Naive thymus-derived CD4-positive, alpha-beta T cell (primary cell): ENCODE measurements at regions of chr12 and their contacts with region 1.

Region 1: DNA sequence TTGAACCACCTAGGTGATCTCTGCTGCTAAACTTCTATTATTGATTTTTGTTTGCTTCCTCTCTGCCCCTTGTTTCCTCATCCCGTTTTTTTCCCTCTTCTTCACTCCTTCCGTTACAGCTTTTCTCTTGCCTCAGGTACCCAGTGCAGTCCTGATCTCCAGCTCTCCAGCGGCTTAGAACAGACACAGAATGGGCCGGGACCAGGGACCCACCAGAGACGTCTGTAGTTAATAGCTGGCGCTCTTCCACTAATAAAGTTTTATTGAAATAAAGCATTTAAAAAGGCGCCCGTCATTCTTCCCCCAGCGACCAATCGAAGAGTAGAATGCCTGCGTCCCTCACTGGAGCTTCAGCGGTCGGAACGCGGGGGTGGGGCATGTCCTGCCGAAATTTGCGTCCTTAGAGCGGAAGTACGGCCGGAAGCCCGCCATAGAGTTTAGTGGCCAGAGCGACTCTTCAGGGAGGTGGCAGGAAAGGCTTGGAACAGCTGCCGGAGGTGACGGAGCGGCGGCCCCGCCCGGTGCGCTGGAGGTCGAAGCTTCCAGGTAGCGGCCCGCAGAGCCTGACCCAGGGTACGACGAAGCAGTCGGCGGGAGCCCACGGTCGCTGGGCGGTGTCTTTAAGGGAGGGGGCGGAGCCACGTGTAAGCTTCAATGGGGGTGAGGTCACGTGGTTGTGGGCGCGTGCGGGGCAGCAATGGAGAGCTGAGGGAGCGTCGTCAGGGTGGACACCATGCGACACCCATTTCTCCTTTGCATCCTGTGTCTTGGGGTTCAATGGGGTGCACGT is at the start of gene COPS7A:
- DNase-seq: peak; percentile 77 to 94 (median 90)
- ATAC-seq: peak; percentile 93
- H3K4me3 ChIP-seq: peak within 1 kb of the TSS; percentile 63
- H3K4me3 Mint-ChIP-seq: peak within 1 kb of the TSS; percentile 80 to 97 (median 92)
- H3K27ac ChIP-seq: peak within 1 kb of the TSS; percentile 75
- H3K27ac Mint-ChIP-seq: peak within 1 kb of the TSS; percentile 90 to 98 (median 96)
- H3K4me1 ChIP-seq: peaks cover 10 to 11% of the 10 kb centered on the region in 2 donors
- H3K4me1 Mint-ChIP-seq: peaks cover 24 to 34% (median 27%) of the 10 kb centered on the region in 7 donors
- H3K27me3 ChIP-seq: no peaks in the 10 kb centered on the region
- H3K27me3 Mint-ChIP-seq: no peaks in the 10 kb centered on the region
- total RNA-seq, gene COPS7A: 21.9 to 38.7 (median 30.1) TPM

Region 2: DNA sequence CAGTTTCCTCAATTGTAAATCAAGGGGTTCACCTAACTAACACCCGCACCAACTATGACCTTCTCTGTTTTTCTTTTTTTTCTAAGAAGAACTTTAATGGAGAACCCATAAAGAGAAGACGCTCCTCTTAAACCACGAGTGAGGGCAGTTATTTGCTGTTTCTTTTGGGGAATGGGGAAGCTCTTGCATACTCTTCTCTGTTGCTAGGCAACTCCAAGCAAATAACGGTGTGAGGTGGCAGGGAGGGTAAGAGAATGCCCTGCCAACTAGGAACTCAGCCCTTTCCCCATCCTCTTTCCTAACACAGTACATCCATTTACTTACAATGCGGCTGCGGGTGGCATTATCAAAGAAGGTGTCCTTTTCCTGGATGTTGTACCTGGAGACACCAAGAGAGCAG is 893.7 kb before region 1 on chr12:
- CTCF ChIA-PET with region 1: no interaction called
- POLR2A ChIA-PET with region 1: no interaction called
- intact Hi-C with region 1: no loop called
- DNase-seq: no peak
- ATAC-seq: no peak
- H3K4me3 ChIP-seq: no peak overlapping the region
- H3K4me3 Mint-ChIP-seq: no peak overlapping the region
- H3K27ac ChIP-seq: no peak overlapping the region
- H3K27ac Mint-ChIP-seq: no peak overlapping the region
- H3K4me1 ChIP-seq: no peaks in the 10 kb centered on the region
- H3K4me1 Mint-ChIP-seq: no peaks in the 10 kb centered on the region
- H3K27me3 ChIP-seq: no peaks in the 10 kb centered on the region
- H3K27me3 Mint-ChIP-seq: peaks cover 3 to 50% (median 19%) of the 10 kb centered on the region in 5 donors

Region 3: GRCh38 chr12:6250343-6250742 is 473.5 kb before region 1 on chr12:
- CTCF ChIA-PET with region 1: no interaction called
- POLR2A ChIA-PET with region 1: no interaction called
- intact Hi-C with region 1: no loop called
- DNase-seq: no peak
- ATAC-seq: no peak
- H3K4me3 ChIP-seq: no peak overlapping the region
- H3K4me3 Mint-ChIP-seq: no peak overlapping the region
- H3K27ac ChIP-seq: no peak overlapping the region
- H3K27ac Mint-ChIP-seq: no peak overlapping the region
- H3K4me1 ChIP-seq: no peaks in the 10 kb centered on the region
- H3K4me1 Mint-ChIP-seq: no peaks in the 10 kb centered on the region
- H3K27me3 ChIP-seq: no peaks in the 10 kb centered on the region
- H3K27me3 Mint-ChIP-seq: peaks cover 0 to 12% (median 9%) of the 10 kb centered on the region in 5 donors

Region 4: GRCh38 chr12:6563448-6564050 is 160.3 kb before region 1 on chr12:
- CTCF ChIA-PET with region 1: no interaction called
- POLR2A ChIA-PET with region 1: interaction called, 4 read pairs
- intact Hi-C with region 1: loop called in 1 of 2 experiments (anchors 1 kb)
- DNase-seq: peak; percentile 36 to 68 (median 52)
- ATAC-seq: peak; percentile 43
- H3K4me3 ChIP-seq: no peak overlapping the region
- H3K4me3 Mint-ChIP-seq: peak overlapping the region in 2 of 10 donors; percentile 6 to 55
- H3K27ac ChIP-seq: no peak overlapping the region
- H3K27ac Mint-ChIP-seq: peak overlapping the region in 7 of 9 donors; percentile 9 to 86 (median 78)
- H3K4me1 ChIP-seq: peaks cover 8 to 14% of the 10 kb centered on the region in 2 donors
- H3K4me1 Mint-ChIP-seq: peaks cover 22 to 54% (median 41%) of the 10 kb centered on the region in 7 donors
- H3K27me3 ChIP-seq: no peaks in the 10 kb centered on the region
- H3K27me3 Mint-ChIP-seq: no peaks in the 10 kb centered on the region

Region 5: DNA sequence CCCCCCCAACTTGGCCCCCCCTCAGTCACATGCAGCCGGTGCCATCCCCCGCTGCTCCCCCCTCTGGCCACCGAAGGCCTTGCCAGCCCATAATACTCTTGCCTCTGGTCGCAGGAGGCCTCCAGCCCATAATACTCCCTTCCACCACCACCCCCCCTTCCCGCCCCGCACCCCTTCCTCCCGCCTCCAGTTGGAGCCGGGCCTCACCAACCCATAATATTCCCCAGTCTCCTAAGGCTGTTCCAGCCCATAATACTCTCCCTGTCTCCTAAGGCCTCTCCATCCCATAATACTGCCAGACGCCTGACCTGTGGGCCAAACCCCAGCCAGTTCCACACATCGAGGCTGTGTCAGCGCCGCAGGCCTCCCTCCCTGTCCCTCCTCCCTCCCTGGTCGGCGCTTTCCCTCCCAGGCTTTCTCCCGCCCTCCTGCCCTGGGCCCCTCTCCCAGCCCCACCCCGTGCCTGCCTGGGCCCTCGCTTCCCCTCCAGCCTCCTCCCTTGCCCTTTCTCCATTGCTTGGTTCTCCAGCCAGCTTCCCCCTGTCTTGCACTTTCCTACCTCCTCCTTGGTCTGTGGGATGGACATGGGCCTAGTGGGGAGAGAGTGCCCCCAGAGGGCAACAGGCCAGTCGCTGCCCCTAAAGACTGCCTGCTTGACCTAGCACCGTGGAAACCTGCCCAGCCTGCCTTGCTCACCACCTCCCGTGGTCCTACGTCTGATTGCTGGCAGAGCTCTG is 109.9 kb before region 1 on chr12:
- CTCF ChIA-PET with region 1: interaction called, 3 read pairs
- POLR2A ChIA-PET with region 1: interaction called, 6 read pairs
- intact Hi-C with region 1: loop called in 1 of 2 experiments (anchors 1 kb)
- DNase-seq: peak in 2 of 9 donors; percentile 28 to 32
- ATAC-seq: peak; percentile 74
- H3K4me3 ChIP-seq: no peak overlapping the region
- H3K4me3 Mint-ChIP-seq: peak overlapping the region in 7 of 10 donors; percentile 30 to 70 (median 36)
- H3K27ac ChIP-seq: peak overlapping the region; percentile 64
- H3K27ac Mint-ChIP-seq: peak overlapping the region; percentile 51 to 91 (median 87)
- H3K4me1 ChIP-seq: peaks cover 20 to 30% of the 10 kb centered on the region in 2 donors
- H3K4me1 Mint-ChIP-seq: peaks cover 26 to 54% (median 48%) of the 10 kb centered on the region in 7 donors
- H3K27me3 ChIP-seq: no peaks in the 10 kb centered on the region
- H3K27me3 Mint-ChIP-seq: no peaks in the 10 kb centered on the region

Region 6: DNA sequence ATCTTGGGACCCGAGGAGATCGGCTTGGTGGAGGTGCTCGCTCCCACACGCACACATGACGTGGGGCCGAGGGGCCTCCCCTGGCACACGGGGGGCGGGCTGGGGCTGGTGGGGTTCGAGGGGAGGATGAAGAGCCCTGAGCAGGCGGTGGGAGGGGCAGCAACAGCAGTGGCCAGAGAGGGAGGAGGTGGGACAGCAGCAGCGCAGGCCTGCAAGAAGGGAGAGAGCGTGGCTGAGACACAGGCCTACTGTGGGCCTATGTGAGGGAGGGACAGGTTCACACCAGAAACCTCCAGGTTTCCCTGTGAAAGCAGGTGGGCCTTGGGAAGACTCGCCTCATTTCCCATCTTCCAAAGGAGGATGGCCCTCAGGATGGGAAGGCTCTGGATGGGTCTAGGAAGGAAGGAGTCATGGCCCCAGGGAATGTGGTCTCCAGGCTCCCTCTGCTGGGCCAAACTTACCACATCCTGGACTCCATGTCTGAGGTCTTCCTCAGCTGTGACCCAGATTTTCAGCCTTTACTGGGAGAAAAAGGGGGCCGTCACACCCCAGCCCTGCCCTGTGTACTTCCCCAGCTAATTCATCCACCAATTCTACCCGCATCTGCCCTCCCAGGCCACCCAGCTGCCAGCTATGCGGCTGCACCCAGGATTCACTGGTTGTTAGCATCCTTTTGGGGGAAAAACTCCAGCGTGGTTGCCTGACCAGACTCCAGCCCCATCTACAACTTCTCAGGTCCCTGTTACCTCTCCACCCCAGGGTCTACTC is 26.0 kb before region 1 on chr12:
- CTCF ChIA-PET with region 1: interaction called, 5 read pairs
- POLR2A ChIA-PET with region 1: interaction called, 16 read pairs
- intact Hi-C with region 1: loop called in 1 of 2 experiments (anchors 1 kb)
- DNase-seq: no peak
- ATAC-seq: peak; percentile 25
- H3K4me3 ChIP-seq: no peak overlapping the region
- H3K4me3 Mint-ChIP-seq: peak overlapping the region in 1 of 10 donors; percentile 25
- H3K27ac ChIP-seq: no peak overlapping the region
- H3K27ac Mint-ChIP-seq: peak overlapping the region in 2 of 9 donors; percentile 24 to 51
- H3K4me1 ChIP-seq: peaks cover 5 to 8% of the 10 kb centered on the region in 2 donors
- H3K4me1 Mint-ChIP-seq: peaks cover 9 to 39% (median 28%) of the 10 kb centered on the region in 7 donors
- H3K27me3 ChIP-seq: peaks cover 0 to 6% of the 10 kb centered on the region in 2 donors
- H3K27me3 Mint-ChIP-seq: peaks cover 0 to 47% (median 29%) of the 10 kb centered on the region in 5 donors

Region 7: DNA sequence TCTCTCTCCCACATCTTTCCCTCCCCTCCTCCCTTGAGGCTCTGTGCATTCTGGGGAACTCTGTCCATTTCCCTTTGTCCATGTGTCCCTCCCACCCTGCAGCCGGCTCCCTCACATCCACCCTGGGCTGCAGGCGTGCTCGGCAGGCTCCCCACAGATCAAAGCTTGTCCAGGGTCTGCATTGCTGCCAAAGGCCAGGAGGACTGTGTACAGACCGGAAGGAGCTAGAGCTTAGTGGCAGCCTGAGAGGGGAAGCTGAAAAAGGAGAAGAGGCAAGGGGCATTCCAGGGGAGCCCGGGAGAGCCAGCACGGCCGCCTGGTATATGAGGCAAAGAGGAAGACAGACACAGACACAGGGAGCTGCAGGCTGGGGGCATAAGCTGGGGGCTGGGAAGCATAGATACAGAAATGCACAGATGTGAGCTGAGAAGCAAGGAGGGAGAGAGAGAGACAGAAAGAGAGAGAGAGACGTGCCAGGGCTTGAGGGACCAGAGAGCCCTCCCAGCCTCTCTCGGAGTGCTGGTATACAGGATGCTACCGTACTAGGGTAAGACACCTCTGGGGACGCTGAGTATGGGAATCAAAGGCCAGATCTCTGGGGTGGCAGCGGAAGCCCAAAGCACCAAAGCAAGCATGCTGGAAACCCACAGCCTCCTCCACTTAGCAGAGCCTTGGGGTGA is 68.9 kb after region 1 on chr12:
- CTCF ChIA-PET with region 1: no interaction called
- POLR2A ChIA-PET with region 1: interaction called, 8 read pairs
- intact Hi-C with region 1: loop called in 1 of 2 experiments (anchors 1 kb)
- DNase-seq: peak in 7 of 9 donors; percentile 66 to 79 (median 76)
- ATAC-seq: peak; percentile 76
- H3K4me3 ChIP-seq: peak overlapping the region; percentile 87
- H3K4me3 Mint-ChIP-seq: peak overlapping the region; percentile 85 to 99 (median 96)
- H3K27ac ChIP-seq: peak overlapping the region; percentile 86
- H3K27ac Mint-ChIP-seq: peak overlapping the region; percentile 88 to 99 (median 97)
- H3K4me1 ChIP-seq: peaks cover 0 to 29% of the 10 kb centered on the region in 2 donors
- H3K4me1 Mint-ChIP-seq: peaks cover 52 to 84% (median 72%) of the 10 kb centered on the region in 7 donors
- H3K27me3 ChIP-seq: no peaks in the 10 kb centered on the region
- H3K27me3 Mint-ChIP-seq: no peaks in the 10 kb centered on the region

Region 8: DNA sequence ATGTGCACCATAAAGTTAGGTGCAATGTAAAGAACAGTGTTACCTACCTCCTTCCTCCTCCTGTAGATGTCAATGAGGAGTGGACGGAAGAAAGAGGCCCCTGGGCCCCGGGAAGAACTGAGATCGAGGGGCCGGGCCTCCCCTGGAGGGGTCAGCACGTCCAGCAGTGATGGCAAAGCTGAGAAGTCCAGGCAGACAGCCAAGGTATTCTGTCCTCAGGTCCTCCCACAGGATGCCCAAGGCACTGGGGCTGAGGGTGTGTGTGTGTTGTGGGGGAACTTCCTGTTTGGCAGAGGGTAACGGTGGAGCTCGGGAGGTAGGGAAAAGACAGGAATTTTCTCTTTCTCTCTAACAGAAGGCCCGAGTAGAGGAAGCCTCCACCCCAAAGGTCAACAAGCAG is 210.3 kb after region 1 on chr12:
- CTCF ChIA-PET with region 1: no interaction called
- POLR2A ChIA-PET with region 1: no interaction called
- intact Hi-C with region 1: no loop called
- DNase-seq: no peak
- ATAC-seq: no peak
- H3K4me3 ChIP-seq: no peak overlapping the region
- H3K4me3 Mint-ChIP-seq: peak overlapping the region in 3 of 10 donors; percentile 41 to 59 (median 42)
- H3K27ac ChIP-seq: peak overlapping the region; percentile 92
- H3K27ac Mint-ChIP-seq: peak overlapping the region; percentile 57 to 99 (median 84)
- H3K4me1 ChIP-seq: peaks cover 6 to 46% of the 10 kb centered on the region in 2 donors
- H3K4me1 Mint-ChIP-seq: peaks cover 49 to 82% (median 67%) of the 10 kb centered on the region in 7 donors
- H3K27me3 ChIP-seq: no peaks in the 10 kb centered on the region
- H3K27me3 Mint-ChIP-seq: no peaks in the 10 kb centered on the region